Sciatic nerve (tissue), 2 donors: ENCODE measurements at regions of chr11 and their contacts with region 1.

Region 1: DNA sequence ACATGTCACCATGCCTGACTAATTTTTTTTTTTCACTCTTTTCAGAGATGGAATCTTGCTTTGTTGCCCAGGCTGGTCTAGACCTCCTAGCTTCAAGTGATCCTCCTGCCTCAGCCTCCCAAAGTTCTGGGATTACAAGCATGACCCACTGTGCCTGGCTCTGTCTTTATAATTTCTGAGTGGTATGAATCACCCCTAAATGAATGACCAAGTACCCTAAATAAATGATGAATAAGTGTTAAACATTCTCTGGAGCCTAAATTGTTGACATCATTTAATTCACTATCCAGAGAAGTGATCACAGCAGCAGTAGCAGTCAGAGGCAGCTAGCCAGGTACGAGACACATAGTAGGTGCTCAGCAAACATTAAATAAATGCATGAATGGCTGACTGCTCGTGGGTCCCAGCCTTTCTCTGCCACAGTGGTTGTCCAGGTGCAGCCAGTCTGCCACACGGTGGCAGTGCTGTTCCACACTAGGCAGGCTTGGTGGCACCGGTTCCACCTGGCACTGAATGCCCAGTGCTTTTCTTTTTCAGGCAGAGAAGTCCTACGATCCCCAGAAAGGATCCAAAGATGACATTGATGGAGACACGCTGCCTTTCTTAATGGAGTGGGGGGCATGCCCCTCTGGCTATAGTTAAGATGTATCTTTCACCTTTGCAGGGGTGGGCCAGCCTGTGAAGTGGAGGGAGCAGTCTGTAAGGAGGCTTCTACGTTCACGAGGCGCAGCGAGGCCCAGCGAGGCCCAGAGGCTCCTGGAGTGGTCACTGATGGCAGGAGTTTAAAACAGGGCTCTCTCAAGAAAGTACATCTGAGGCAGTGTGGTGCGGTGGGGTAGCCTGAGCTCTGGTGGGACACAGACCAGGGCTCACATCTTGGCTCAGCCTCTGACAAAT is 8.7 kb upstream of the TTC12 start:
- DNase-seq: peak; percentile 87
- ATAC-seq: peak; percentile 93

Region 2: GRCh38 chr11:113532697-113533424 is 227.2 kb after region 1 on chr11:
- intact Hi-C with region 1: loop called (anchors 10 kb)
- DNase-seq: peak; percentile 91
- ATAC-seq: peak; percentile 87

Region 3: GRCh38 chr11:113728814-113729213 is 423.1 kb after region 1 on chr11:
- intact Hi-C with region 1: loop called (anchors 10 kb)
- DNase-seq: no peak
- ATAC-seq: no peak